ENCODE measurements at regions of chr10 and their contacts with region 1.

Region 1: DNA sequence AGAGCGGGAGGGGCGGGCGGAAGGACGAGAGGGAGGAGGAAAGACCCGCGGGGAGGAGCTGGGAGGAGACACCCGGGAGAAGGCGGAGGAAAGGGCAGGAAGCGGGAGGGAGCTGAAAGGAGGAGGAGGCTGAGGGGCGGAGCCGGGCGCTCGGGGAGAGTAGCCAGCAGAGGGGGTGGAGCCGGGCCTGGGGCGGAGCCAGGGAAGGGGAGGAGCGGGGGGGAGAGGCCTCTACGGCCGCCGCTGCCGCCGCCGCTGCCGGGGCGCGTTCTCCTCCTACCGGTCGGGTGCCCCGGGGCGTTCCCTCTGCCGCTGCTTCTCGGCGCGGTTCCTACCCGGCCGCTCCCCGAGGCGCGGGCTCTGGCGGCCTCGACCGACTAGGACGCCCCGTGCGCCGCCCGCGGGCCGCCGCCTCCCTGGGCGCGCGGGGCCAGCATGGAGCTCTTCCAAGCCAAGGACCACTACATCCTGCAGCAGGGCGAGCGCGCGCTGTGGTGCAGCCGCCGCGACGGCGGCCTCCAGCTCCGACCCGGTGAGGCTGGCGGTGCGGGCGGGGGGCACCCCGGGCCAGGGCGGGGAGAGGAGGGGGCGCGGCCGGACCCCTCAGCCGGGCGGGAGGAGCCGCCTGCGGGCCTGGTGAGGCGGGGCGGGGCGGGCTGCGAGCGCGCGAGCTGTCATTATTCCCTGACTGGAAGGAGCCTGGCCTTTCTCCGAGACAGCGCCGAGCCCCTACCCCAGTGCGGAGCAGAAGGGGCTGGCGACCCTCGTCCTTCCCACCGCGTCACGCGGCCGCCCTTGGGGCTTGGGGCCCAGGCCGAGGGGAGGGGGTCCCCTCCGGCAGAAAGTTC is at the start of gene INPP5F:
- DNase-seq: peak; percentile 99 to 100
- ATAC-seq: peak; percentile 97 to 99 (median 98)
- H3K4me3 ChIP-seq: peak within 1 kb of the TSS; percentile 88
- H3K27ac ChIP-seq: peak within 1 kb of the TSS; percentile 98
- H3K4me1 ChIP-seq: peaks cover 18% of the 10 kb centered on the region
- H3K27me3 ChIP-seq: no peaks in the 10 kb centered on the region
- CTCF ChIP-seq: peak; percentile 36
- total RNA-seq, gene INPP5F: 8.0 to 12.3 (median 10.7) TPM

Region 2: GRCh38 chr10:119608316-119609155 is 117.5 kb before region 1 on chr10:
- intact Hi-C with region 1: loop called in 1 of 2 experiments (anchors 5 kb)
- DNase-seq: peak; percentile 43 to 78
- ATAC-seq: peak; percentile 89 to 98 (median 94)
- H3K4me3 ChIP-seq: peak overlapping the region; percentile 34
- H3K27ac ChIP-seq: no peak overlapping the region
- H3K4me1 ChIP-seq: peaks cover 7% of the 10 kb centered on the region
- H3K27me3 ChIP-seq: no peaks in the 10 kb centered on the region
- CTCF ChIP-seq: peak; percentile 77

Region 3: GRCh38 chr10:119686439-119687191 is 39.4 kb before region 1 on chr10:
- intact Hi-C with region 1: loop called (anchors 1 to 5 kb)
- DNase-seq: peak; percentile 82 to 92
- ATAC-seq: peak; percentile 66 to 73 (median 70)
- H3K4me3 ChIP-seq: peak overlapping the region; percentile 39
- H3K27ac ChIP-seq: peak overlapping the region; percentile 62
- H3K4me1 ChIP-seq: peaks cover 10% of the 10 kb centered on the region
- H3K27me3 ChIP-seq: no peaks in the 10 kb centered on the region
- CTCF ChIP-seq: peak; percentile 94

Region 4: GRCh38 chr10:120172356-120172755 is 446.3 kb after region 1 on chr10:
- intact Hi-C with region 1: no loop called
- DNase-seq: no peak
- ATAC-seq: no peak
- H3K4me3 ChIP-seq: no peak overlapping the region
- H3K27ac ChIP-seq: no peak overlapping the region
- H3K4me1 ChIP-seq: no peaks in the 10 kb centered on the region
- H3K27me3 ChIP-seq: no peaks in the 10 kb centered on the region
- CTCF ChIP-seq: no peak